ENCODE measurements at regions of chr5 and their contacts with region 1.

Region 1: DNA sequence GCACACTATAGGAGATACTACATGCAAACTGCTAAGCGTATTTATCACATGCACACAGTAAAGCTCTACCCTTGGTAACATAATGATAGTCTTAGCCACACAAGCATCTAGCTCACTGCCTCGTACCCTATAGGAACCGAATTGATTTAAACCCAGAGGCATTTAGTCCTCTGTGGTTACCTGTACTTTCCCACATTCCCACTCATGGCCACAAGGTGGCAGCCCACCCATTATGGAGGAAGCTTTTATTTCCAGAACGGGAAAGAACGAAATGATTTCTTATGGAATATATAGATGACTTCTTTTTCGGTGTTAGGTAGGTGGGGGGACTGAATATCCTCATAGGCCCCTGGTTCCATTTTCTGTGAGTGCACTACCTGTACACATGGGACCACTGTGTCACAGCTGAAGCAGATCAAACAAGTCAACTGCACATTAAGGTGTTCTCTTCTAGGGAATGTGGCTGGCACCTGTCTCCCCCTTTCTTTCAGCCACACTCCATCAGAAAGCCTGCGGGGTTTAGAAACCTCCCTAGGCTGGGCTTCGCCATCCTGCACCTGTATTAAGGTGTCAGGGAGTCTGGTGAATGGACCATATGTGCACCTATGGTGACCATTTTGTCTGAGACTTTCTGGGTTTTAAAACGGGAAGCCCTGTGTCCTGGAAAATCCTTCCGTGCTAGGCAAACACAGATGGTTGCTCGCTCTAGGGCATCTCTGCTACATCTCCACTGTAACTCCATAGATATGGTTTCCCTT is 313.2 kb downstream of the SLIT3 start:
- DNase-seq: peak in 2 of 3 donors; percentile 72 to 89
- ATAC-seq: peak; percentile 69
- H3K4me3 ChIP-seq: no peak overlapping the region
- H3K4me1 ChIP-seq: no peaks in the 10 kb centered on the region
- CTCF ChIP-seq: peak; percentile 79

Region 2: GRCh38 chr5:169302491-169303118 is 314.9 kb after region 1 on chr5:
- intact Hi-C with region 1: loop called (anchors 2 to 5 kb)
- DNase-seq: peak; percentile 63 to 76 (median 70)
- ATAC-seq: peak; percentile 66
- H3K4me3 ChIP-seq: no peak overlapping the region
- H3K4me1 ChIP-seq: peaks cover 4% of the 10 kb centered on the region
- CTCF ChIP-seq: peak; percentile 79

Region 3: DNA sequence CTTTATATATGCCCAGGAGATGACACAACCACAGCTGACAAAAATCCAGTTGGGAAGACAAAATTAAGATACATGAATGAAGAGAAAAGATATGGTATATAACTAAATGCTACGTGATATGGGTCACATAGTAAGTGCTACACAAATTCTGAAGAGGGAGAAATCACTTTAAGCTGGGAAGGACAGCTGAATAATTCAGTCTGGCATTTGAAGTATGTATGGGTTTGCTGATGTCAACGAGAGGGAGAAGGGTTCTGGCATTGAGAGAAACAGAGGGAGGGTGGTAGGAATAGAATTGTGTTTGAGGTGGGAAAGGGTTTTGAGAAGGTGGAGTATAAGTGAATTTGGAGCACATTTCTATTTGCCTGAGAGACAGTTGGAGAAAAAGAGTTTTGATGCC is 319.9 kb after region 1 on chr5:
- intact Hi-C with region 1: loop called (anchors 2 to 5 kb)
- DNase-seq: no peak
- ATAC-seq: no peak
- H3K4me3 ChIP-seq: no peak overlapping the region
- H3K4me1 ChIP-seq: no peaks in the 10 kb centered on the region
- CTCF ChIP-seq: no peak

Region 4: GRCh38 chr5:169554251-169554650 is 566.5 kb after region 1 on chr5:
- intact Hi-C with region 1: loop called in 1 of 2 experiments (anchors 10 kb)
- DNase-seq: no peak
- ATAC-seq: no peak
- H3K4me3 ChIP-seq: no peak overlapping the region
- H3K4me1 ChIP-seq: no peaks in the 10 kb centered on the region
- CTCF ChIP-seq: no peak

Region 5: DNA sequence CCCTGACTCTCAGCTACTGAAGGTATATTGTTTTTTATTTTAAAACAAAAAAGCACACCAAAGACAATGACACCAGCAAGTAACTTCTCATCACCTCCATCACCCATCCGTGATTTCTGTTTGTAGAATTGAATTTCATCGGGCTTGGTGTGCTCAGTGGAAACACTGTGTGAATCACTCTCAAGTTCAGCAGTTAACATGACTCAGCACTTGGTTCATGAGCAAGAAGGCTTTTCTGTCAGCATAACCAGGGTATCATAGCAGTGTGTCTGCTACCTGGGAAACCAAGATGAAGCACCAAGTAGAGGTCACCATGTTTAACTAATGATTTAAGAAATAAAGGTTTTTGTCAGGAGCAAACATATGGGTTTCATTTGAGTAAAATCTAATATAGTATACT is 868.8 kb after region 1 on chr5:
- intact Hi-C with region 1: no loop called
- DNase-seq: no peak
- ATAC-seq: no peak
- H3K4me3 ChIP-seq: no peak overlapping the region
- H3K4me1 ChIP-seq: no peaks in the 10 kb centered on the region
- CTCF ChIP-seq: no peak

Measured in mucosa of descending colon (tissue), 3 donors.